Posterior cingulate gyrus (tissue), 11 donors: ENCODE measurements at regions of chr15 and their contacts with region 1.

Region 1: DNA sequence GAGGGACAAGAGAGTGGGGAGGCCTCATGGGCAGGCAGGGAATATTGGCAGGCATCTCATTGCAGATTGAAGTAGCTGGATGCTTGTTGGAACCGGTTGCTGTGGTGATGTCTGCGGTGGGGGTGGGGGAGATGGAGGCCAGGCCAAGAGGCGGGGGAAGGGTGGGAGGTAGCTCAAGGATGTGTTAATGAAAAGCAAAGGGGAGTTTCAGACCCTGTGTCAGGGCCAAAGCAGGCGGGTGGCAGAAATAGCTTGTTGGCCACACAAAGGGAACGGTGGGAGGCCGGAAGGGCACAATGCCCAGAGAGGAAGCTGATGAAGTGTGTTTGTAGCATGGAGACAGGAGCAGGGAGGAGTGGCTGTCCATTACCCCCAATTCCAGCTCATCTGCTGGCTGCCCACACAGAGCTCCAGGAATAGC is 28.0 kb downstream of the CCDC33 start:
- DNase-seq: peak in 8 of 10 donors; percentile 42 to 90 (median 66)

Region 2: DNA sequence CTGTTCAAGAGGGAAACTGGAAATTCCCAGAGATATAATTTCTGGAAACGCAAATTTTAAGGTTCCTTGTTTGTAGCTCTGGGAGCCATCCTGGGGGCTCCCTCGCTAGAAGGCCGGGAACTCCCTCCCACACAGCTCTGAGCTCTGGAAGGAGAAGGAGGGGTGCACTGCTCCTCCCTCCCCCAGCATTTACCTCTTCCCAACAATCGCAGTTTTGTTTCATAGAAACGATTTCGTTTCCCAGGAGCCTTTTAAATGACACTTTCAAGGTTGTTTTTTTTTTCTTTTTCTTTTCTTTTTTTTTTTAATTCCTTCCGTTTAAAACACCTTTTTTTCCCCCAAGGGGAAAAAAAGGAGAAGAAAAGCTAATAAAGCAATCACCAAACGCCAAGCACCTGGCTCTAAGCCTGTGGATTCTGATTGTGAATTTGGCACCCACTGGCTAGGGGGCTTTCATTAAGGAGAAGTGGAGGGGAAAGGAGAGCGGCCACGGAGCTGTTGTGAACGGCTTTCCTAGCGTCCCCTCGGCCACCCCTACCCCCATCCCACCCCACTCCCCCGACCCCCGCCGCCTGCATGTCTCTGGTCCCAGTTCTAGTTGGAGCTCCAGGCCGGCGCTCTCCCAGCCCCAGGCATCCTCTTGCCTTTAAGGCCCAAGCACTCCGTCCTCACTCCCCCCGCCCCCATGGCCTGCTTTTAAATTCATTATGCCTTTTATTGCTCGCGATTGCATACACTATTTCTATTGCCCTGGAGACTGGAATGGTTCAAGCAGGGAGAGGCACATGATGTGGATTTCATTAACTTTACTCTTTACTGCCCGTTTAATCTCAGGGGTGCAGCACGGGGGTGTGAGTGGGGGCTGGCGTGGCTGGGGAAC is 41.6 kb before region 1 on chr15:
- intact Hi-C with region 1: loop called (anchors 5 kb)
- DNase-seq: peak in 1 of 10 donors; percentile 50